HepG2 (cell line): ENCODE measurements at regions of chr20 and their contacts with region 1.

Region 1: DNA sequence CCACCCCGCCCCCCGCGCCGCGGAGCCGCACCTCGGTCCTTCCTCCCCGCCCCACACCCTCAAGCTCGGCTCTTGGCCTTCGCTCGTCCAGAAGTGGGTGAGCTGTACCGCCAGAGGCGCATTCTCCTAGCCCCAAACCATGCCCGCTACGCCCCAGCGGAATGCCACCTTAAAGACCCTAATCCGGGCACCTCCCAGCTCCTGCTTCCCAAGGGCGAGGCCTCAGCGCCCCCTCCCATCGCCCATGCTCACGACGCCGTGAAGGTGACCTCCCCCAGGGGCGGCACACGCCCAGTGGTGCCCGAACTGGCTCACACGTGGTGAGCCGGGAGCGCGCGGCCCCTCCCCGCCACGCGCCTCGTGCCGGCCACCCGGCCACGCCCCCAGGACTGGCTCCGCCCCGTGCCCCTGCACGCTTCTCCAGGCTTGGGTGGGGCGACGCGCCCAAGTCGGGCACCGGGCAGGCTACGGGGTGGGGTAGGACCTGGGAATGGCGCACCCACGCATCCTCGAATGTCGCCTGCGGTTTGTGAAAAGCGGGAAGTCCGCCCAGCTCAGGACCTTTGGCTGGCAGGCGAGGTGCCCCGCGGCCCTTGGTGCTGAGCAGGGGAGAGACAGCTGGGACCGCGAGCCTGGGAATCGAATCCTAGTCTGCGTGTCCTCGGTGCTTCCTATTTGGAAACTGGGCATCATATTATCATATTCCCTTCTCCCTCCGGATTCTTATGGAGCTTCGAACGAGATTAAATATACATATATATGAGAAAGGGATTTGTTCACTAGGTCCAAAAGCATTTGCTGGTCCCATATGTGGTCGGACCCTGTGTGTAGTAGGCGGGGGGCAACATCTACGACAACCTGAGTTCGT is 941 bp upstream of the SOX12 start:
- DNase-seq: peak; percentile 89
- ATAC-seq: peak; percentile 73
- H3K4me3 ChIP-seq: peak overlapping the region; percentile 70 to 96 (median 84)
- H3K27ac ChIP-seq: peak overlapping the region; percentile 87
- H3K4me1 ChIP-seq: peaks cover 31% of the 10 kb centered on the region
- H3K27me3 ChIP-seq: no peaks in the 10 kb centered on the region; a peak in 1 of 5 replicates
- CTCF ChIP-seq: peak; percentile 51
- EP300 ChIP-seq: peak; percentile 59 to 71; a peak in 3 of 4 replicates
- POLR2A ChIP-seq: peak in 1 of 2 experiments; percentile 86; a peak in 2 of 4 replicates
- RAD21 ChIP-seq: peak; percentile 71

Region 2: GRCh38 chr20:297098-297924 is 27.1 kb before region 1 on chr20 and contains the start of gene ZCCHC3:
- CTCF ChIA-PET with region 1: no interaction called
- POLR2A ChIA-PET with region 1: interaction called, 106 read pairs
- in situ Hi-C with region 1: no loop called
- intact Hi-C with region 1: loop called (anchors 1 kb)
- DNase-seq: peak; percentile 96
- ATAC-seq: peak; percentile 96
- H3K4me3 ChIP-seq: peak within 1 kb of the TSS; percentile 69 to 93 (median 89)
- H3K27ac ChIP-seq: peak within 1 kb of the TSS; percentile 92
- H3K4me1 ChIP-seq: peaks cover 39% of the 10 kb centered on the region
- H3K27me3 ChIP-seq: peaks cover 0 to 24% of the 10 kb centered on the region in 2 experiments; a peak in 3 of 5 replicates
- CTCF ChIP-seq: peak; percentile 74
- EP300 ChIP-seq: peak; percentile 75 to 92
- POLR2A ChIP-seq: peak; percentile 82 to 86
- RAD21 ChIP-seq: peak; percentile 66
- total RNA-seq, gene ZCCHC3: 56.2 and 63.0 TPM in 2 replicates

Region 3: GRCh38 chr20:309841-310644 is 14.4 kb before region 1 on chr20:
- CTCF ChIA-PET with region 1: no interaction called
- POLR2A ChIA-PET with region 1: interaction called, 37 read pairs
- in situ Hi-C with region 1: no loop called
- intact Hi-C with region 1: no loop called
- DNase-seq: peak; percentile 96
- ATAC-seq: peak; percentile 96
- H3K4me3 ChIP-seq: peak overlapping the region; percentile 39 to 62 (median 54)
- H3K27ac ChIP-seq: peak overlapping the region; percentile 60
- H3K4me1 ChIP-seq: peaks cover 47% of the 10 kb centered on the region
- H3K27me3 ChIP-seq: no peaks in the 10 kb centered on the region; a peak in 1 of 5 replicates
- CTCF ChIP-seq: 0 out of 2 replicates have a peak, but pooled peaks have one; percentile 3
- EP300 ChIP-seq: 0 out of 4 replicates have a peak, but pooled peaks of 1 of the 2 experiments have one; percentile 7
- POLR2A ChIP-seq: peak; percentile 52 to 79
- RAD21 ChIP-seq: no peak; the same call in 1 of the 2 replicates